ENCODE measurements at regions of chr20 and their contacts with region 1.

Region 1: DNA sequence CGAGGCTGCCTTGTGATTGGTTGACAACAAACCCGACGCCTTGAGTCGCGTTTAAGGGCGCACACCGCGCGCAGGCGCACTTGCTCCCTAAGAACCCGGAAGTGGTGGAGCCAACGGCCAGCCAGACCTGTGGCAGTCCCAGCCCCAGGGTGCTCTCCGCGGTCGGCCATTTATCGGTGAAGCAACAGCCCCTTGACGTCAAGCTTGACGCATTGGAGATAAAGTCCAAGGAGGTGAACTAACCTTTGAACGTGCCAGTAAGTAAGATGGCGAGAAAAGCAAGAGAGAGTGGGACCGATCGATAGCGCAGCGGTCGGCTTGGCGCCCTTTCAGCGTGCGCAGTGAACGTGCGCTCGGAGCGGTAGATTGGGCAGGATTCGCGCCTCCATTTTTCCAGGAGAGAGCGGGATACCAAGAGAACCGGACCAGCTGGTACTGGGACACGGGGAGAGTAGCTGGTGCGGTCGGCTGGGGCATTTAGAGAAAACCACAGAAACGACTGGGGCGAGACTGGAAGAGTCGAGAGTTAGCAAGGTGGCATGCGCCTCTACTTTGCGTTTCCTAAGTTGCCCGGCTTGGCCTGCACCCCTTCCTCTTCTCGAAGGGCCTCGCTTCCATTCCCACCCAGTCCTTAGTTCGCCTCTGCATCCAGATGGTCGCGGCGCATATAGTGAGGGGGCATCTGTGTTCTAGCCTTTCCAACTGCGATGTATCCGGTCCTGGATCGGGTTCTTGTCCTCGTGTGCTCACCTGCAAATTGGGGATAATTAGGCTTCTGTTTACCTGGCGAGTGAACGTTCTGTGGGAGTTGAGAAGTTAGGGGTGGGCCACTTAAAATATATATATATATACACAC is at the start of gene CSTF1:
- DNase-seq: peak; percentile 100
- H3K4me3 ChIP-seq: peak within 1 kb of the TSS; percentile 77 to 84 (median 82)
- H3K27ac ChIP-seq: peak within 1 kb of the TSS; percentile 88 to 93 (median 90)
- H3K4me1 ChIP-seq: peaks cover 0 to 31% (median 24%) of the 10 kb centered on the region in 4 donors
- H3K27me3 ChIP-seq: no peaks in the 10 kb centered on the region
- CTCF ChIP-seq: no peak
- EP300 ChIP-seq: peak in 2 of 4 donors; percentile 64 to 73
- POLR2A ChIP-seq: no peak
- total RNA-seq, gene CSTF1: 14.9 to 24.6 (median 19.5) TPM

Region 2: DNA sequence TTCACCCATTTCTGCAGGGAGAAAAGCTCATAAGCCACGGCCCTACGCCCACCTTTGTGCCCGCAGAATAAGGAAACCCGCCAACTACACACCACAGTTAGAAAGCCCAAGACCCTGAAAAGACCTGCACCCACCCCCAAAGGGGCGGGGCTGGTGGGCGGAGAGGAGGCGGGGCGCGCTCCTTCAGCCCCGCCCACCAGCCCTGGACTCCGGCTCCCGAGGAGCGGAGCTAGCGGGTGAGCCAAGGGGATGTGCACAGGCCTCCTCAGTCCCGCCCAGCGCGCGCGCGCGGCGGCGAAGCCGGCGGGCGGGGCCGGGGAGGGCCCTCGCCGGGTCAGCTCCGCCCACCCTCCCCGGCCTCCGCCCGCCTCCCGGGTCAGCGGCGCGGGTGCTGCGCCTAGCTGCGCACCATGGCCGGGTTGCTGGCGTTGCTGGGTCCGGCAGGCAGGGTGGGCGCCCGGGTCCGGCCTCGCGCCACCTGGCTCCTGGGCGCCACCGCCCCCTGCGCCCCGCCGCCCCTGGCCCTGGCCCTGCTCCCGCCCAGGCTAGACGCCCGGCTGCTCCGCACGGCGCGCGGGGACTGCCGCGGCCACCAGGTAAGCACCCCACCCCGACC is 33.8 kb before region 1 on chr20 and contains the start of gene FAM210B:
- intact Hi-C with region 1: loop called (anchors 2 kb)
- DNase-seq: peak; percentile 94
- H3K4me3 ChIP-seq: peak within 1 kb of the TSS; percentile 87 to 100 (median 95)
- H3K27ac ChIP-seq: peak within 1 kb of the TSS; percentile 89 to 91 (median 90)
- H3K4me1 ChIP-seq: peaks cover 0 to 34% (median 27%) of the 10 kb centered on the region in 4 donors
- H3K27me3 ChIP-seq: no peaks in the 10 kb centered on the region
- CTCF ChIP-seq: no peak
- EP300 ChIP-seq: no peak
- POLR2A ChIP-seq: no peak
- total RNA-seq, gene FAM210B: 41.9 to 52.2 (median 50.4) TPM

Region 3: DNA sequence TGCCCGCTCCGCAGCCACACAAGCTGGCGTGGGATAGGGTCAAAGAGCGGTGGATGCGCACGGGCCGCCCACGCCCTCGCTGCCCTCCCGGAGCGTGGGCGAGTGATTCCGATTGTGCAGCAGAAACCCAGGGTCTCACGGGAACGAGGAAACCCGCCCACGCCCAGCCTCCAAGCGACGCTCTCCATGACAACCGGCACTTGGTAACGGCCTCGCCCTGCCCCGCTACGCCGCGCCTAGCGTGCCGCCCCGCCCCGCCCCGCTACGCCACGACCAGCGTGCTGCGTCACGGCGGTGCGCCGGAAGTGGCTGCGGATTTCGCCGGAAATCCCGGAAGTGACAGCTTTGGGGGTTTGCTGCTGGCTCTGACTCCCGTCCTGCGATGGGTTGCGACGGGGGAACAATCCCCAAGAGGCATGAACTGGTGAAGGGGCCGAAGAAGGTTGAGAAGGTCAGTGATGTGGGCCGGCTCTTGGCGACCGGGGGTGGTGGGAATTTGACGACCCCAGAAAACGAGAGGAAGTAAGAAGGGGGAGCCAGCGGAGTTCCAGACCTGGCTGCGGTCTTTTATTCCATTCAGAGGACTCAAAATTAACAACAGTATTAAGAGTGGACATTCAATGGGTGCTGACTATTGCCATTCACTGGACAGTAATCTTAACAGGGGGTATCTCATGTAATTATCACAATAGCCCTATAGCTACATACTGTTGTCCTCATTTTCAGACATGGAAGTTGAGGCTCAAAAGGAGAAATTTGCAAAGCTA is 76.0 kb after region 1 on chr20 and contains the start of gene RTF2:
- intact Hi-C with region 1: loop called (anchors 2 kb)
- DNase-seq: peak; percentile 96
- H3K4me3 ChIP-seq: peak within 1 kb of the TSS; percentile 57 to 84 (median 75)
- H3K27ac ChIP-seq: peak within 1 kb of the TSS; percentile 78 to 88 (median 86)
- H3K4me1 ChIP-seq: peaks cover 0 to 38% (median 20%) of the 10 kb centered on the region in 4 donors
- H3K27me3 ChIP-seq: no peaks in the 10 kb centered on the region
- CTCF ChIP-seq: no peak
- EP300 ChIP-seq: no peak
- POLR2A ChIP-seq: peak in 1 of 2 donors; percentile 26
- total RNA-seq, gene RTF2: 47.6 to 62.4 (median 57.1) TPM

Region 4: DNA sequence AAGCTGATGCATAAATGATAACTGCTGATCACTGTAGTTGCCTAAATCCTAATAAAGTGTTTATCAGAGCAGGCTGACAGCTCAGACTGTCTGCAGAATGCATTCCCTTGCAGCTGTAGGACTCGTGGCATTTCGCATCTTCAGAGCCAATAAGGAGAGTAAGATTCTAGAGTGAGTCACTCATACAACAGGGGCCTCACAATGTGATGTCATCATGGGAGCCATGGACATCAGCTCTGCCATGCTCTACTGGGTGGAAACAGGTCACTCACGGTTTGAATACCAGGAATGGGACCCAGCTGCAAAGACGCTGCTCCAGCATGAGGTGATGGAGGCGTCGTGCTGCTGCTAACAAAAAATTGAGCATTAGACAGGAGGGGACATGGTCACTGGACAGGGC is 147.9 kb after region 1 on chr20:
- intact Hi-C with region 1: no loop called
- DNase-seq: no peak
- H3K4me3 ChIP-seq: no peak overlapping the region
- H3K27ac ChIP-seq: no peak overlapping the region
- H3K4me1 ChIP-seq: no peaks in the 10 kb centered on the region
- H3K27me3 ChIP-seq: no peaks in the 10 kb centered on the region
- CTCF ChIP-seq: no peak
- EP300 ChIP-seq: no peak
- POLR2A ChIP-seq: no peak